Activated CD4-positive, alpha-beta memory T cell treated with anti-CD3 and anti-CD28 coated beads, Interleukin-2, amount 10 ng/mL, durations not matched to agents 7 days and 5 days (primary cell): ENCODE measurements at regions of chr4 and their contacts with region 1.

Region 1: GRCh38 chr4:145097821-145098674 is at the starts of genes ABCE1 and ANAPC10:
- DNase-seq: peak; percentile 96
- H3K4me3 Mint-ChIP-seq: peak within 1 kb of the TSS; percentile 85
- H3K27ac Mint-ChIP-seq: peak within 1 kb of the TSS; percentile 96
- H3K4me1 Mint-ChIP-seq: peaks cover 33% of the 10 kb centered on the region
- H3K27me3 Mint-ChIP-seq: no peaks in the 10 kb centered on the region
- total RNA-seq, gene ABCE1: 60.6 to 63.3 TPM
- total RNA-seq, gene ANAPC10: 22.4 to 28.4 TPM

Region 2: GRCh38 chr4:145047151-145047550 is 50.9 kb before region 1 on chr4:
- CTCF ChIA-PET with region 1: no interaction called
- POLR2A ChIA-PET with region 1: no interaction called
- DNase-seq: no peak
- H3K4me3 Mint-ChIP-seq: no peak overlapping the region
- H3K27ac Mint-ChIP-seq: no peak overlapping the region
- H3K4me1 Mint-ChIP-seq: peaks cover 1% of the 10 kb centered on the region
- H3K27me3 Mint-ChIP-seq: no peaks in the 10 kb centered on the region

Region 3: DNA sequence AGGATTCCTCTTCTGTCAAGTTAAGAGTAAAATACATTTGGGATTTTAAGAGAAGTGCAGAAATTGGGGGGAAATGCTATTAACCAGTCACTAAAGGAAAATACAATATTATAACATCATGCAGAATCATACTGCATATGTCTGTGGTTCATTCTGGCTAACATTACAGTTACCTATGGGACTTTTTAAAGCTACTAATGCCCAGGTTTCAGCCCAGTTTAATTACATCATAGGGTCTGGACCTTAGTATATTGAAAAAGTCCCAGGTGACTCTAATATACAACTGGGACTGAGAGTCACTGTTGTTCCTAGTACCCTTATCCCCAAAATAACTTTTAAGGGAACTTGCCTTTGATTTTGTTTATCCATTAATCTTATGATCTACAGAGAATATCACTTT is 10.1 kb after region 1 on chr4:
- CTCF ChIA-PET with region 1: interaction called, 3 read pairs
- POLR2A ChIA-PET with region 1: interaction called, 33 read pairs
- DNase-seq: no peak
- H3K4me3 Mint-ChIP-seq: no peak overlapping the region
- H3K27ac Mint-ChIP-seq: no peak overlapping the region
- H3K4me1 Mint-ChIP-seq: peaks cover 13% of the 10 kb centered on the region
- H3K27me3 Mint-ChIP-seq: no peaks in the 10 kb centered on the region

Region 4: DNA sequence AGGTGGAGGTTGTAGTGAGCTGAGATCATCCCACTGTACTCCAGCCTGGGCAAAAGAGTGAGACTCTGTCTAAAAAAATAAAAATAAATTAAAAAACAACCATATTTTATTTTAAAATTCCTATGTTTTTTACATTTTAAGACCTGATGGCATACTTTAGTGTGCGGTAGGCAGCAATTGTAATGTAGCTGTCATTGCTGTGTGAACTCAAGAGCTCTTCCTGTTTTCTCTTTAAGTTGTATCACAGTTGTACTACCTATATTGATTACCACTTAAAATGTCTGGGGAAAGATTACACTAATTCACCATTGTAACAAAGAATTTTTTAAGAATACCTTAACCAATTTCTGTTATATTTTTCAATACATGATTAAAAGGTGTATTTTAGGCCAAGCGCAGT is 27.3 kb after region 1 on chr4:
- CTCF ChIA-PET with region 1: interaction called, 4 read pairs
- POLR2A ChIA-PET with region 1: interaction called, 43 read pairs
- DNase-seq: no peak
- H3K4me3 Mint-ChIP-seq: peak overlapping the region; percentile 67
- H3K27ac Mint-ChIP-seq: peak overlapping the region; percentile 98
- H3K4me1 Mint-ChIP-seq: peaks cover 41% of the 10 kb centered on the region
- H3K27me3 Mint-ChIP-seq: no peaks in the 10 kb centered on the region

Region 5: DNA sequence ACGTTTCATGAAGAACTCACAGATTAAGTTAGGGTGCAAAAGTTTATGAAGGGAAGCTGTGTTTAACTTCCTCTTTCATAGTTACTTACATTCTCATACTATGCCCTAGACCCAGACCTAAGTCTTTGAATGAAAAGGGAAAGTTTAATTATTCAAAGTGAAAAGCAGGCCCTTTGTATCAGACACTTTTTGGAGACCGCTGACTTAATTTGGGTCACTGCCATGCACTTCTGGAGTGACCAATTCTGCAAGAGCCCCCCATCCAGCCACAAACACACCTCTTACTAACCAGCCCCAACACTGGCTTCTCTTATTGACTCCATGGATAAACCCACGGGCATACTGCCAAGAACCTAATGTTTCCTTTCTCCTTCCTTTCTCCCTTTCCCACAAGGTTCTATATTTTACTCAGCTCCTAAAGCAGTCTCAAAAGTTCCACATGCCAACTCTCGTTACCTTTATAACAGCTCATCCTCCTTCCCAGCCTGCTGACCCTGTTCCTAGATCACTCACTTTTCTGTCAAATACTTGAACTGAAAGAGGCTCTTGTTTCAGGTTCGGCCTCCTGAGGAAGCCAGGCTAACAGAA is 34.6 kb after region 1 on chr4:
- CTCF ChIA-PET with region 1: no interaction called
- POLR2A ChIA-PET with region 1: interaction called, 43 read pairs
- DNase-seq: no peak
- H3K4me3 Mint-ChIP-seq: peak overlapping the region; percentile 26
- H3K27ac Mint-ChIP-seq: peak overlapping the region; percentile 70
- H3K4me1 Mint-ChIP-seq: peaks cover 74% of the 10 kb centered on the region
- H3K27me3 Mint-ChIP-seq: no peaks in the 10 kb centered on the region